ENCODE measurements at regions of chr1 and their contacts with region 1.

Region 1: DNA sequence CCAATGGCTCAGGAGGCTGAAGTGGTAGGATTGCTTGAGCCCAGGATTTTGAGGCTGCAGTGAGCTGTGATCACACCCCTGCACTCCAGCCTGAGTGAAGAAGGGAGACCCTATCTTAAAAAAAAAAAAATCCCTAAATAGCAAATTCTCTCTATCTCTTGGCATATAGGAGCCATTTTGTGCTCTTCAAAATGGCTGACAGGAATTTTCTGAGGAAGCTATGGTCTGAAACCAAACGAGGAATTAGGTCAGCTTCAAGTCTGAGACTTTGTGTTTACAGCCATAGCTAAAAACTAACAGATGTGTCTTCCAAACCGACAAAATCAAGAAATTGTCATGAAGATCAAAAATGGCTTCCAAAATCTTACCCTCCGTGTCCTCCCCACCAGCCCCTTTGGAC is 10.6 kb downstream of the CD247 start:
- DNase-seq: no peak
- H3K4me3 Mint-ChIP-seq: no peak overlapping the region
- H3K27ac Mint-ChIP-seq: no peak overlapping the region
- H3K4me1 Mint-ChIP-seq: peaks cover 89% of the 10 kb centered on the region
- H3K27me3 Mint-ChIP-seq: no peaks in the 10 kb centered on the region

Region 2: GRCh38 chr1:167491586-167492461 is 15.9 kb before region 1 on chr1:
- CTCF ChIA-PET with region 1: interaction called, 11 read pairs
- POLR2A ChIA-PET with region 1: no interaction called
- DNase-seq: peak; percentile 70
- H3K4me3 Mint-ChIP-seq: peak overlapping the region; percentile 63
- H3K27ac Mint-ChIP-seq: peak overlapping the region; percentile 92
- H3K4me1 Mint-ChIP-seq: peaks cover 94% of the 10 kb centered on the region
- H3K27me3 Mint-ChIP-seq: no peaks in the 10 kb centered on the region

Measured in activated CD4-positive, alpha-beta T cell treated with anti-CD3 and anti-CD28 coated beads, Interleukin-2, amount 10 ng/mL, durations not matched to agents 7 days and 5 days (primary cell).